ENCODE measurements at regions of chr19 and their contacts with region 1.

Region 1: GRCh38 chr19:10717356-10718204 is at the start of gene DNM2:
- DNase-seq: peak; percentile 97 to 100
- H3K4me3 ChIP-seq: peak within 1 kb of the TSS; percentile 82 to 98 (median 95)
- H3K27ac ChIP-seq: peak within 1 kb of the TSS; percentile 79 to 85
- H3K4me1 ChIP-seq: no peaks in the 10 kb centered on the region
- H3K27me3 ChIP-seq: no peaks in the 10 kb centered on the region
- CTCF ChIP-seq: peak; percentile 87 to 92 (median 91)
- POLR2A ChIP-seq: peak; percentile 42
- total RNA-seq, gene DNM2: 83.1 to 98.6 (median 84.5) TPM

Region 2: GRCh38 chr19:10769533-10770491 is 52.2 kb after region 1 on chr19:
- intact Hi-C with region 1: loop called (anchors 10 kb)
- DNase-seq: no peak
- H3K4me3 ChIP-seq: no peak overlapping the region
- H3K27ac ChIP-seq: peak overlapping the region; percentile 40 to 44
- H3K4me1 ChIP-seq: peaks cover 2 to 13% of the 10 kb centered on the region in 2 donors
- H3K27me3 ChIP-seq: no peaks in the 10 kb centered on the region
- CTCF ChIP-seq: peak in 2 of 3 donors; percentile 7
- POLR2A ChIP-seq: no peak

Region 3: GRCh38 chr19:10864538-10864899 is 146.9 kb after region 1 on chr19:
- intact Hi-C with region 1: loop called (anchors 5 kb)
- DNase-seq: peak; percentile 64 to 88
- H3K4me3 ChIP-seq: peak overlapping the region in 1 of 3 donors; percentile 6
- H3K27ac ChIP-seq: peak overlapping the region; percentile 29 to 79
- H3K4me1 ChIP-seq: no peaks in the 10 kb centered on the region
- H3K27me3 ChIP-seq: no peaks in the 10 kb centered on the region
- CTCF ChIP-seq: peak; percentile 66 to 87 (median 87)
- POLR2A ChIP-seq: no peak